GM13976 (cell line): ENCODE measurements at regions of chr18 and their contacts with region 1.

Region 1: DNA sequence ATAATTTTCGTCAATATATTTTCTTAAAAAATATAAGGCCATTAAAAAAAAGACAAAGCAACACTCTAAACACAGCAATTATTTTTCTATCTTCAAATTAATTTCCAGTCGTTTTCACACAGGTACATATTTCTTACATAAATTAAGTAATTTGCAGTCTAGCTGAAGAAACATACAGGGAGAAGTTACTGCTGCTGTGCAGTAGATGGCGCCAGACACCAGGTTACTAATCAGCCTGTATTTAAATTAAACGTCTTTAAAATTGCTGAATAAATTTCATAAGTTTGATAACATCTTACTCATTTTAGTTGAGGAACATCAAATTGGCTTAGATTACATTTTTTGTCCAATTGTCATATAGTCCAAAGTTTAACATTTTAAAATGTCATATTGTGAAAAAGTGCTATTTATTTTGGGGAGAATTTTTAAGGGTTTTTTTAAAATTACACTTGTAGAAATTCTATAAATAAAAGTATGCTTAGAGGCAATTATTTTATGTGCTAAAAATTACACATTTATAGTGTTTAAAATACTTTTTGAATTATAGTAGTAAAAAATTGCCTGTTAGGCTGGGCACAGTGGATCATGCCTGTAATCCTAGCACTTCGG is 88.4 kb downstream of the PMAIP1 start:
- DNase-seq: peak; percentile 43
- CTCF ChIP-seq: peak; percentile 76

Region 2: DNA sequence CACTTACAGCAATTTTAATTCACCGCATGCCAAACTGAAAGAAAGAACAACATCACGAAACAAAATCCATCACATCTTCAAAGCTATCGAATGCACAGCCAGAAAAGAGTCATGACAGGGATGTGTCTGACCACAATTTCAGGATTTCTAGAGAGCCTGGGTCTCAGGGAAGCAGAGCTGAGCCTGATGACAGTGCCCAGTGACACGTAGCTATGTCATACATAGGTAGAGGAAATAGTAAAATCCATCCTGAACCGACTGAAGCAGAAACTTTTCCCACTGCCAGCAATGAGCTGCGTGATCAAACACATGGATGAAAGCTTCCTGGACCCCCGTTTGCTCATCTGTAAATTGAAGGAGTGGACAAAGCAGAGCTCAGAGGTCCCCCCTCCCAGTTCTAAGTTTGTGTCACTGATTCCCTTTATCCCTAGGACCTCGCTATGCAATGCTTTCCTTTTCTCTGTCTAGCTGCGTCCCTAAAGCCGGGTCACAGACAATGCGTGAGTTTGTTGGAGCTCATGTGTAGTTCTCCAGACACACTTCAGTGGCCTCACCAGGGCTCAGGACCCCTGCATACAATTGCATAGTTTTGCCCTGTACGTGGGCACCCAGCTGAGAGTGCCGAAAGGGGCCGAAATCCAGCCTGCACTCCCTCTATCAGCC is 328.6 kb before region 1 on chr18:
- in situ Hi-C with region 1: no loop called
- DNase-seq: no peak
- CTCF ChIP-seq: no peak

Region 3: GRCh38 chr18:60413944-60414547 is 425.8 kb after region 1 on chr18:
- in situ Hi-C with region 1: loop called (anchors 25 kb)
- DNase-seq: no peak
- CTCF ChIP-seq: peak; percentile 45

Region 4: GRCh38 chr18:60549338-60549960 is 561.2 kb after region 1 on chr18:
- in situ Hi-C with region 1: loop called (anchors 25 kb)
- DNase-seq: peak; percentile 41
- CTCF ChIP-seq: peak; percentile 57